Testis (tissue), 5 donors: ENCODE measurements at regions of chr1 and their contacts with region 1.

Region 1: DNA sequence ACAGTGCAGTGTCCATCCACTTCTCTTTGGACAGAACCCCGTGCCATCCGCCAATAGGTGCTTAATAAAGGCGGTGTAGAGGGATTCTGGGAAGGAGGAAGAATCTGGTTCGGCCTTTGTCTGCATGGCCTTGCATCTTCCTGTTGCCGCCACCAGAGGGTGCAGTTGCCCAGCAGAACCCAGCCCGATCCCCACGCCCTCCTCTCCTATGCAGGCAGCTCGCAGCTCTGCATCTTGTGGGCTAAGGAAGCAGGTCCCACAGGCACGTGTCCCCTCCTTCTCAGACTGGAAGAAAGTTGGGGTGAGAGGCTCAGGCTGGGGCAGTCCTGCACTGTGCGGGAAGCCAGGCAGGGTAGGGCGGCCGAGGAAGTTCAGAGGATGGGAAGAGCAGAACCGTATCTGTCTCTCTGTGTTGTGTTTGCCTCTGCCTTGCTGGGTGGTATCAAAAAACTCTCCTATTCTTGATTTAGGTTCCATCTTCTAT is 20.8 kb downstream of the NAV1 start:
- DNase-seq: peak; percentile 91
- H3K4me3 ChIP-seq: no peak overlapping the region
- H3K27ac ChIP-seq: no peak overlapping the region
- H3K4me1 ChIP-seq: no peaks in the 10 kb centered on the region
- H3K27me3 ChIP-seq: no peaks in the 10 kb centered on the region
- CTCF ChIP-seq: peak; percentile 93 to 98 (median 97)
- POLR2A ChIP-seq: no peak

Region 2: GRCh38 chr1:201320163-201320788 is 239.4 kb before region 1 on chr1:
- intact Hi-C with region 1: no loop called
- DNase-seq: no peak
- H3K4me3 ChIP-seq: no peak overlapping the region
- H3K27ac ChIP-seq: no peak overlapping the region
- H3K4me1 ChIP-seq: no peaks in the 10 kb centered on the region
- H3K27me3 ChIP-seq: no peaks in the 10 kb centered on the region
- CTCF ChIP-seq: no peak
- POLR2A ChIP-seq: no peak

Region 3: GRCh38 chr1:201511941-201512539 is 47.7 kb before region 1 on chr1:
- intact Hi-C with region 1: no loop called
- DNase-seq: peak; percentile 41
- H3K4me3 ChIP-seq: no peak overlapping the region
- H3K27ac ChIP-seq: peak overlapping the region; percentile 32 to 64
- H3K4me1 ChIP-seq: peaks cover 29% of the 10 kb centered on the region
- H3K27me3 ChIP-seq: no peaks in the 10 kb centered on the region
- CTCF ChIP-seq: no peak
- POLR2A ChIP-seq: no peak

Region 4: GRCh38 chr1:201792534-201793305 is 233.0 kb after region 1 on chr1:
- intact Hi-C with region 1: loop called (anchors 10 kb)
- DNase-seq: peak; percentile 84
- H3K4me3 ChIP-seq: no peak overlapping the region
- H3K27ac ChIP-seq: no peak overlapping the region
- H3K4me1 ChIP-seq: peaks cover 21% of the 10 kb centered on the region
- H3K27me3 ChIP-seq: no peaks in the 10 kb centered on the region
- CTCF ChIP-seq: peak; percentile 97
- POLR2A ChIP-seq: no peak